ENCODE measurements at regions of chr3 and their contacts with region 1.

Region 1: GRCh38 chr3:9302425-9303181 is 53.2 kb upstream of the SRGAP3 start:
- DNase-seq: peak; percentile 89
- ATAC-seq: peak; percentile 91
- H3K4me3 Mint-ChIP-seq: peak overlapping the region; percentile 70
- H3K27ac Mint-ChIP-seq: no peak overlapping the region
- H3K4me1 Mint-ChIP-seq: peaks cover 14% of the 10 kb centered on the region
- H3K27me3 Mint-ChIP-seq: peaks cover 14% of the 10 kb centered on the region
- CTCF ChIP-seq: peak; percentile 85

Region 2: DNA sequence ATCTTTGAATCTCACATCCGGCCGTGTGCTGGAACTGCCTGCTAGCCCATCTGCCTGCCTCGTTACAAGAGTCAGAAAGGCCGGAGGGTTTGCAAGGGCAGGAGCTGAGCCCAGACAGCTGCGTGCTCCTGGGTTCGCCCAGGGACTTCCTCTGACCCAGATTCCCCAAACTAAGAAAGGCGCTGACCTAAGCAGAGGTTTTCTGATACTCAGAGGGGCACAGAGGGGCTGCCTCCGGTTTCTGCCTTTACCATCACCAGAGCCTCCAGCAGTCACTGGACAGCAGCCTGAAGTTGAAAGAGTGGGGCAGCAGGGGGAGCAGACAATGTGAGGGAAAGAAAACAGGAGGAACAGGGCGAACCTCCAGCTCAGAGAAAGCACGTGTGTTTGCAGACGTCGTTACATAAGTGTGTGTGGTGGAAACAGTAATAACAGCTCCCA is 305.9 kb before region 1 on chr3:
- CTCF ChIA-PET with region 1: interaction called, 24 read pairs
- POLR2A ChIA-PET with region 1: no interaction called
- DNase-seq: peak; percentile 41
- ATAC-seq: peak; percentile 88
- H3K4me3 Mint-ChIP-seq: no peak overlapping the region
- H3K27ac Mint-ChIP-seq: no peak overlapping the region
- H3K4me1 Mint-ChIP-seq: peaks cover 10% of the 10 kb centered on the region
- H3K27me3 Mint-ChIP-seq: no peaks in the 10 kb centered on the region
- CTCF ChIP-seq: no peak

Region 3: GRCh38 chr3:9111866-9112265 is 190.7 kb before region 1 on chr3:
- CTCF ChIA-PET with region 1: interaction called, 44 read pairs
- POLR2A ChIA-PET with region 1: no interaction called
- DNase-seq: no peak
- ATAC-seq: peak; percentile 23
- H3K4me3 Mint-ChIP-seq: no peak overlapping the region
- H3K27ac Mint-ChIP-seq: no peak overlapping the region
- H3K4me1 Mint-ChIP-seq: peaks cover 7% of the 10 kb centered on the region
- H3K27me3 Mint-ChIP-seq: no peaks in the 10 kb centered on the region
- CTCF ChIP-seq: no peak

Region 4: DNA sequence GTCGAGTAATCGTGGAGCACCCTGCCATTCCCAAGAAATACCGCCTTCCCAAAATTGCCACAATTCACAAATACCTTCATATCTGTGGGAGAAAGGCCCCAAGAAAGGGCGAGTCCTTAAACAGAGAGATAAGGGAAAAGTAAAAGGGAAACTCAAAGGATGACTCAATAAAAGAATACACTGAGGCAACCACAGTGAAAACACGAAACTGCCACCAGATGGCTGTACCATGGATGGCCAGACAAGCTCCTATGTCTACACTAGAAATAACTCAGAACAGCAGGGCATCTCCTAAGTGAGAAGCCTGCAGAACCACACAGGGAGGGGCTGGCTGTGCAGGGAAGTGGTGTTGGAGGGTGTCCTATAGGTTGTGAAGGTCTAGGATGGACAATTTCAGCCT is 78.1 kb before region 1 on chr3:
- CTCF ChIA-PET with region 1: interaction called, 12 read pairs
- POLR2A ChIA-PET with region 1: no interaction called
- DNase-seq: no peak
- ATAC-seq: no peak
- H3K4me3 Mint-ChIP-seq: no peak overlapping the region
- H3K27ac Mint-ChIP-seq: no peak overlapping the region
- H3K4me1 Mint-ChIP-seq: peaks cover 51% of the 10 kb centered on the region
- H3K27me3 Mint-ChIP-seq: no peaks in the 10 kb centered on the region; the same call in 1 of the 2 replicates
- CTCF ChIP-seq: no peak

Region 5: DNA sequence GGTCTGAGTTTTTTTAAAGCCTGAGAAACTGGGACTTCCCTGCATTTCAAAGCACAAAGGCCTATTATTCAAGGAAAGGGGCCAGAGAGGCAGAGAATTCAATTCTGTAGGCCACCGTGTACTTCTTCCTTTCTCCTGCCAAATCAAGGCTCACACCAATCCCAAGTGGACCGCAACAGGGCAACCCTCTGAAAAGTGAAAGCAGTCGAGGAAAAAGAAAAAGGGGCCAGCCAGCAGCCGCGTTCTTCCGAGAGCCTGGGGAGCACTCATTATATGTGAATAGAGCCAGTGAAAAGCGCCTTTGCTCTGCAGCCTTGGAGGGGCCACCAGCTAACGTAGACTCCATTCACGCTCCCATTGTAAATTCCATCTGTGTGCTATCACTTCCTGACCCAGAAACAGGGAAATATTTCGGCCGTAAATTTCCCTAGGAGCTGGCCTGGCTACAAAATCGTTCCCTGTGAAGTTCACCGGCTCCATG is 14.3 kb after region 1 on chr3:
- CTCF ChIA-PET with region 1: interaction called, 39 read pairs
- POLR2A ChIA-PET with region 1: no interaction called
- DNase-seq: peak; percentile 15
- ATAC-seq: peak; percentile 90
- H3K4me3 Mint-ChIP-seq: peak overlapping the region; percentile 36
- H3K27ac Mint-ChIP-seq: peak overlapping the region; percentile 79
- H3K4me1 Mint-ChIP-seq: peaks cover 26% of the 10 kb centered on the region
- H3K27me3 Mint-ChIP-seq: peaks cover 8% of the 10 kb centered on the region
- CTCF ChIP-seq: no peak